Activated naive CD8-positive, alpha-beta T cell treated with anti-CD3 and anti-CD28 coated beads, Interleukin-2, amount 10 ng/mL, durations not matched to agents 7 days and 5 days (primary cell): ENCODE measurements at regions of chr19 and their contacts with region 1.

Region 1: GRCh38 chr19:898663-899062 is 5.4 kb downstream of the RNU6-9 start:
- DNase-seq: no peak
- ATAC-seq: no peak
- H3K4me3 Mint-ChIP-seq: no peak overlapping the region
- H3K27ac Mint-ChIP-seq: peak overlapping the region; percentile 63
- H3K4me1 Mint-ChIP-seq: peaks cover 3% of the 10 kb centered on the region
- H3K27me3 Mint-ChIP-seq: no peaks in the 10 kb centered on the region

Region 2: DNA sequence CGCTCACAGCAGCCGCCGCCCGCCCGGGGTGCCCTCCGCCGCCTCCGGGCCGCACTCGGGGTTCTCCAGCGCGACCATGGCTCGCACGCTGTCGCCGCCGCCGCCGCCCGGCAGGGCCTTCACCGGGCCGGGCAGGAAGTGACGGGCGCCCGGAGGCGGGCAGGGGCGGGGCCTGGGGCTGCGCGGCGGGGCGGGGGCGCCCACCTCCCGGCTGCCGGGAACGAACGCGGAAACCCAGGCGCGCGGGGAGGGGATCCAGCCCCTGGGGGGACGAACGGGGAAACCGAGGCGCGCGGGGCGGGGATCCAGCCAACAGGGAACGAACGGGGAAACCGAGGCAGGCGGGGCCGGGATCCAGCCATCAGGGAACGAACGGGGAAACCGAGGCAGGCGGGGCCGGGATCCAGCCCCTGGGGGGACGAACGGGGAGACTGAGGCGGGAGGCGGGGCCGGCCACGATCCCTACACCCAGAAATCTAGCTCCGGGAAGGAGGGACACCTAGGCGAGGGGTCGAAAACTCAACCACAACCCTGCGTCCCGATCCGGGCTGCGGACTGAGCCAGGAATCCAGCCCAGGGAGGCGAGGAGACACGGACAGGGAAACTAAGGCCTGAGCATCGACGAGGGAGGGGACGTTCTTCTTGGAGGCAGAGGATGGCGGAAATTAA is 14.6 kb after region 1 on chr19 and contains the start of gene R3HDM4:
- POLR2A ChIA-PET with region 1: interaction called, 57 read pairs
- DNase-seq: peak; percentile 92
- ATAC-seq: peak; percentile 53
- H3K4me3 Mint-ChIP-seq: peak within 1 kb of the TSS; percentile 91
- H3K27ac Mint-ChIP-seq: peak within 1 kb of the TSS; percentile 95
- H3K4me1 Mint-ChIP-seq: peaks cover 25% of the 10 kb centered on the region
- H3K27me3 Mint-ChIP-seq: peaks cover 2% of the 10 kb centered on the region
- total RNA-seq, gene R3HDM4: 108 to 113 TPM

Region 3: GRCh38 chr19:940591-941291 is 42.1 kb after region 1 on chr19:
- POLR2A ChIA-PET with region 1: no interaction called
- DNase-seq: peak; percentile 64
- ATAC-seq: peak; percentile 31
- H3K4me3 Mint-ChIP-seq: peak overlapping the region; percentile 61
- H3K27ac Mint-ChIP-seq: peak overlapping the region; percentile 42
- H3K4me1 Mint-ChIP-seq: peaks cover 23% of the 10 kb centered on the region
- H3K27me3 Mint-ChIP-seq: peaks cover 17% of the 10 kb centered on the region